ENCODE measurements at regions of chr2 and their contacts with region 1.

Region 1: DNA sequence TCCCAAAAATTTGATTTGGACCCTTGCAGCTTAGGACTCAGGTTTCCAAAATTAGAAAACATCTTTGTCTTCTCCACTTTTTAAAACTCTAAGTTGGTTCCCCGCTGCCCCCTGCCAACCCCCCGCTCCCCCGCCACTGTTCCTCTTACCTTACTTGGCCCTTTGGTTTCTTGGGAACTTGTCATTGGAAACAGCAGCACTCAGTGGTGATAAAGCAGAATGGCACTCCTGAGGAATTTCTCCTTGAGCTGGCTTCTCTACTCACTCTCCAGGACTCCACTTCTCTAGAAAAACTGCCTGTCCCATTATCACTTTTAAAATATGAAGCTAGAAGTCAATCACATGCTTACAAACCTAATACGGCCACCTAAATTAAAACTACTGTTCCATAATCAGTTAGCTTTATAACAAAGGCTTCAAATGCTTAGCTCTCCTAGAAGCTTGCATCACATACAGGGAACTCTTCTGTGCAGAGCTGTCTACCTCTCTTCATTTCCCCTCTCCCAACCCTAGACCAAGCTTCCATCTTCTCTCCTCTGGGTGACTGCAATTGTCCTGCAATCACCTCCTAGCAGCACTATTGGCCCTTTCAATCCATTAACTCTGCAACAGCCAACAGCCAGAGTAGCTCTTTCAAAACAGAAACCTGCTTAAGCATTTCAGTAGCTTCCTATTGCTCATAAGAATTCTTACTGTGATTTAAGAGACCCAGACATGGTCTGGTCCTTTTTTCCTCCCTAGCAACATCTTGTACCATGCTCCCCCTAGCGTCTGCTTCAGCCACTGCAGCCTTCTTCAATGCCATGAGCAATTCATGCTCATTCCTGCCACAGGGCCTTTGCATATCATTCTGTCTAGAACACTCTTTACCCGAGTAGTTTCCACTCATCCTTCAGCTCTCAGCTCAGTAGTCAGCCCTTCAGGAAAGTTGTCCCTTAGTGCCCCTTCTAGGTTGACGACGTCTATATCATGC is 15.2 kb upstream of the PLEKHM3 start:
- DNase-seq: peak; percentile 82
- ATAC-seq: peak; percentile 77
- H3K4me3 Mint-ChIP-seq: no peak overlapping the region
- H3K27ac Mint-ChIP-seq: no peak overlapping the region
- H3K4me1 Mint-ChIP-seq: no peaks in the 10 kb centered on the region
- H3K27me3 Mint-ChIP-seq: no peaks in the 10 kb centered on the region

Region 2: GRCh38 chr2:207334624-207335371 is 705.7 kb before region 1 on chr2:
- CTCF ChIA-PET with region 1: no interaction called
- POLR2A ChIA-PET with region 1: no interaction called
- DNase-seq: no peak
- ATAC-seq: no peak
- H3K4me3 Mint-ChIP-seq: peak overlapping the region; percentile 2
- H3K27ac Mint-ChIP-seq: peak overlapping the region; percentile 36
- H3K4me1 Mint-ChIP-seq: peaks cover 59% of the 10 kb centered on the region
- H3K27me3 Mint-ChIP-seq: no peaks in the 10 kb centered on the region

Region 3: GRCh38 chr2:207725873-207726578 is 314.5 kb before region 1 on chr2:
- CTCF ChIA-PET with region 1: interaction called, 12 read pairs
- POLR2A ChIA-PET with region 1: no interaction called
- DNase-seq: no peak
- ATAC-seq: no peak
- H3K4me3 Mint-ChIP-seq: no peak overlapping the region
- H3K27ac Mint-ChIP-seq: no peak overlapping the region
- H3K4me1 Mint-ChIP-seq: peaks cover 15% of the 10 kb centered on the region
- H3K27me3 Mint-ChIP-seq: no peaks in the 10 kb centered on the region

Region 4: GRCh38 chr2:208025037-208025813 is 15.3 kb before region 1 on chr2 and contains the start of gene PLEKHM3:
- CTCF ChIA-PET with region 1: interaction called, 17 read pairs
- POLR2A ChIA-PET with region 1: no interaction called
- DNase-seq: peak; percentile 80
- ATAC-seq: peak; percentile 94
- H3K4me3 Mint-ChIP-seq: peak within 1 kb of the TSS; percentile 85
- H3K27ac Mint-ChIP-seq: peak within 1 kb of the TSS; percentile 89
- H3K4me1 Mint-ChIP-seq: peaks cover 16% of the 10 kb centered on the region
- H3K27me3 Mint-ChIP-seq: peaks cover 2% of the 10 kb centered on the region
- total RNA-seq, gene PLEKHM3: 6.1 to 6.2 TPM